Mammary epithelial cell (primary cell): ENCODE measurements at regions of chr9 and their contacts with region 1.

Region 1: DNA sequence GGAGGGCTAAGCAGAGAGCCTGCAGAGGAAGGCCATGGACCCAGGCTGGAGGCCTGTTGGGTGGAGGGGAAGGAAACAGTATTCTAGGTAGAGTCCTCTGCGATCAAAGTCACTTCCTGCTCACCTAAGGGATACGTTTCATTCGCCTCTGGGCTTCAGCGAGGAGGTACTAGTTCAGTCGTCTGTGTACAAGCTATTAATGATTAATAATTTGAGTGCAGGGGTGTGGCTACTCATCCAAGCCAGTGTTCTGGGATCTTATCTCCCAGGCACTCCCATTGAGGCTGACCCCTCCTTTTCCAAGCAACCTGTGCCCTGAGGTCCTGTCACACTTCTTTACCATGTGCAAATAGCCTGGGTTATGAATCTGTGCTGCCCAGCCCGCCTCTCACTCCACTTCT is 25.2 kb downstream of the RALGPS1 start:
- DNase-seq: no peak
- H3K4me3 ChIP-seq: no peak overlapping the region
- H3K27ac ChIP-seq: no peak overlapping the region
- H3K4me1 ChIP-seq: no peaks in the 10 kb centered on the region
- H3K27me3 ChIP-seq: peaks cover 5% of the 10 kb centered on the region
- CTCF ChIP-seq: no peak

Region 2: GRCh38 chr9:126773004-126773607 is 166.7 kb before region 1 on chr9:
- CTCF ChIA-PET with region 1: no interaction called
- dilution Hi-C with region 1: no loop called
- in situ Hi-C with region 1: no loop called
- intact Hi-C with region 1: loop called (anchors 2 kb)
- DNase-seq: no peak
- H3K4me3 ChIP-seq: no peak overlapping the region
- H3K27ac ChIP-seq: no peak overlapping the region
- H3K4me1 ChIP-seq: no peaks in the 10 kb centered on the region
- H3K27me3 ChIP-seq: no peaks in the 10 kb centered on the region
- CTCF ChIP-seq: peak; percentile 51 to 75

Region 3: GRCh38 chr9:126885131-126885641 is 54.6 kb before region 1 on chr9:
- CTCF ChIA-PET with region 1: no interaction called
- dilution Hi-C with region 1: no loop called
- in situ Hi-C with region 1: no loop called
- intact Hi-C with region 1: no loop called
- DNase-seq: no peak
- H3K4me3 ChIP-seq: no peak overlapping the region
- H3K27ac ChIP-seq: no peak overlapping the region
- H3K4me1 ChIP-seq: no peaks in the 10 kb centered on the region
- H3K27me3 ChIP-seq: no peaks in the 10 kb centered on the region
- CTCF ChIP-seq: no peak

Region 4: GRCh38 chr9:126927419-126927818 is 12.4 kb before region 1 on chr9:
- CTCF ChIA-PET with region 1: no interaction called
- dilution Hi-C with region 1: no loop called
- in situ Hi-C with region 1: no loop called
- intact Hi-C with region 1: no loop called
- DNase-seq: no peak
- H3K4me3 ChIP-seq: no peak overlapping the region
- H3K27ac ChIP-seq: no peak overlapping the region
- H3K4me1 ChIP-seq: no peaks in the 10 kb centered on the region
- H3K27me3 ChIP-seq: peaks cover 9% of the 10 kb centered on the region
- CTCF ChIP-seq: no peak

Region 5: GRCh38 chr9:126965541-126966428 is 26.0 kb after region 1 on chr9:
- CTCF ChIA-PET with region 1: interaction called, 3 read pairs
- dilution Hi-C with region 1: no loop called
- in situ Hi-C with region 1: no loop called
- intact Hi-C with region 1: loop called (anchors 1 kb)
- DNase-seq: peak; percentile 27
- H3K4me3 ChIP-seq: no peak overlapping the region
- H3K27ac ChIP-seq: no peak overlapping the region
- H3K4me1 ChIP-seq: no peaks in the 10 kb centered on the region
- H3K27me3 ChIP-seq: peaks cover 6% of the 10 kb centered on the region
- CTCF ChIP-seq: peak; percentile 82 to 95

Region 6: GRCh38 chr9:127199001-127199791 is 259.4 kb after region 1 on chr9:
- CTCF ChIA-PET with region 1: interaction called, 4 read pairs
- dilution Hi-C with region 1: no loop called
- in situ Hi-C with region 1: loop called in 1 of 2 experiments (anchors 5 kb)
- intact Hi-C with region 1: loop called (anchors 1 kb)
- DNase-seq: peak; percentile 42
- H3K4me3 ChIP-seq: no peak overlapping the region
- H3K27ac ChIP-seq: no peak overlapping the region
- H3K4me1 ChIP-seq: no peaks in the 10 kb centered on the region
- H3K27me3 ChIP-seq: peaks cover 4% of the 10 kb centered on the region
- CTCF ChIP-seq: peak; percentile 84 to 91

Region 7: GRCh38 chr9:127205183-127205470 is 265.3 kb after region 1 on chr9:
- CTCF ChIA-PET with region 1: no interaction called
- dilution Hi-C with region 1: no loop called
- in situ Hi-C with region 1: loop called in 1 of 2 experiments (anchors 5 kb)
- intact Hi-C with region 1: no loop called
- DNase-seq: no peak
- H3K4me3 ChIP-seq: no peak overlapping the region
- H3K27ac ChIP-seq: no peak overlapping the region
- H3K4me1 ChIP-seq: no peaks in the 10 kb centered on the region
- H3K27me3 ChIP-seq: peaks cover 4% of the 10 kb centered on the region
- CTCF ChIP-seq: no peak

Region 8: GRCh38 chr9:127347831-127348779 is 408.3 kb after region 1 on chr9:
- CTCF ChIA-PET with region 1: no interaction called
- dilution Hi-C with region 1: no loop called
- in situ Hi-C with region 1: no loop called
- intact Hi-C with region 1: loop called (anchors 5 kb)
- DNase-seq: peak; percentile 14
- H3K4me3 ChIP-seq: no peak overlapping the region
- H3K27ac ChIP-seq: no peak overlapping the region
- H3K4me1 ChIP-seq: no peaks in the 10 kb centered on the region
- H3K27me3 ChIP-seq: no peaks in the 10 kb centered on the region
- CTCF ChIP-seq: peak; percentile 51 to 76